Brain microvascular endothelial cell (primary cell): ENCODE measurements at regions of chr17 and their contacts with region 1.

Region 1: DNA sequence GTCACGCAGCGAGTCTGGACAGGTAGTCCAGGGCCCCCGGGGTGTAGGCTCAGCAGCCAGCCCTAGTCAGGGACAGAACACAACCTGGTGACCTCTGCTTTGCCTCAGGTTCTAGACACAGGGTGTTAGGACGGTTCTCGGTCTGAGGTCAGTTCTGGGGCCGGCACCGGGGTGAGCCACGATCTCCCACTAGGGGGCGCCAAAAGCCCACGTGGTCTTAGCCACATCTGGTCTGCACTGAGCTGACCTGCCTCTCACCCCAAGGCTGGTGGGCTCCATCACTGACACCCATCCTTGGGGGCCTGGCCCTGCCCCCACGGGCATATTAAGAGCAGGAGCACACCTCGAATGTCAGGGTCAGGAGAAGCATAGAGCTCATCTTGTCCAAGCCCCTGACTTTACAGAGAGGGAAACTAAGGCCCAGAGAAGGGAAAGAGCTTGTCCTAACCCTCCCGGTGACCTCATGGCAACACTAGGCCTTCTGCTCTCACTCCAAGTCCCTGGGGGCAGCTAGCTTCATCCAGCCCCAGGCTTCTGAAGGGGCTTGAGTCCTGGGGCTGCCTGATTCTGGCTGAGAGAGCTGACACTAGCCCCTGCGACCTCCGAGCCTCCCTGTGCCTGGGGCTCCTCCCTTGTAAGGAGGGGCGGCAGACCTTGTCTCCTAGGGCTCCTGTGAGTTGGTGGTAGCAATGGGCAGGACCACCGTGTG is 9.0 kb downstream of the SLC5A10 start:
- DNase-seq: peak; percentile 66
- H3K4me3 ChIP-seq: no peak overlapping the region
- H3K27ac ChIP-seq: no peak overlapping the region
- H3K27me3 ChIP-seq: no peaks in the 10 kb centered on the region
- CTCF ChIP-seq: peak; percentile 93

Region 2: DNA sequence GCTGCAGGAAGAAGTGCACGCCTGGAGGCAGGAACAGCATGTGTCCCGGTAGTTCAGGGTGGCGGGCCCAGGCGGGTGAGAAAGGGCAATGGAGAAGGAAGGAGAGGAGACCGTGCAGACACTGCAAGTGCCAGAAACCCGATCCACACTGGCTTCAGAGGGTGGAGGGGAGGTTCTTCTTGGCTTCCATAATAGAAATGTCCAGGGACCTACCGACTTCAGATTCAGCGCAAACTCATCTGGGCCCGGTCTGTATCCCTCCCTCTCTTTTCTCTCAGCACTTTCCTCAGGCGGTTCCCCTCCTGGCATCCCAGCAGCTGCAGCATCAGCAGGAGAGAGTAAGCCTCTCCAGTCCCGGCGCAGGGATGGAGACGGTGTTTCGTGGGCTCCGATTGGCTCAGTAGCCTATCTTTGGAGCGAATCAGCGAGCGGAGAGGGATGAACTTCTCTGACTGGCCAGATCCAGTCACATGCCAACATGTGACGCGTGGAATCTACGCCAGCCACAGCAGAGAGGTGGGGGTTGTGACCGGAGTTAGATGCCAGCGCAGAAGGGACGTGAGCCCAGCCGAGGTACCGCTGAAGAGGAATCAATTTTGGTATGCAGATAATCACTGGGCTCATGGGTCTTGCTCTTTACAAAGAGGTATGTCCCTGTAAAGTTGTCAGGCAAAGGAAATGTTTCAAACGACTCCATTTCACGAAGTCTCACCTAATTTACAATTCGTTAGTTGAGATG is 105.0 kb before region 1 on chr17:
- in situ Hi-C with region 1: loop called (anchors 25 kb)
- DNase-seq: peak; percentile 93
- H3K4me3 ChIP-seq: peak overlapping the region; percentile 72
- H3K27ac ChIP-seq: peak overlapping the region; percentile 60
- H3K27me3 ChIP-seq: no peaks in the 10 kb centered on the region
- CTCF ChIP-seq: no peak